B cell (primary cell): ENCODE measurements at regions of chr5 and their contacts with region 1.

Region 1: DNA sequence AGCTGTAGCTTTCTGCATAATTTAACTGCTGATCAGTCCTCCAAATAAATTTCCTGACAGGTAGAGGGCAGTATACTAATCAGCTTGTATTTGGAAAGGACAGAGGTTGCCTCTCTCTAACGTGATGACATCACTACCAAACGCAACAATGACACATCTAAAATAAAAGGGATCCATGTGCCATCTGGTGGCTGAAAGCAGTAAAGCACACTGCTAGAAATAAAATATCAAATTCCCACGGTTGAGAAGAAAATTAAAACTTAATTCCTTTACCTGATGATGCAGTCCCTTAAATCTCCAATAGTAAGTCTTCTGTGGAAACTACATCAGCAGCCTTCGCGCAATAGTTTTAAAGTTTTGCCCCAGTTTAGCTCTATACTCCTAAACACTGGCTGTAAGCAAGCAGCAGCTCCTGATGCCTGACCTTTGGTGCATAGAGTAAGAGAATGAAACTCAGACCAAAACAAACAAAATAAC is 54.5 kb downstream of the DIAPH1 start:
- DNase-seq: peak; percentile 91
- ATAC-seq: peak; percentile 97
- H3K4me3 ChIP-seq: no peak overlapping the region
- H3K4me3 Mint-ChIP-seq: no peak overlapping the region
- H3K27ac ChIP-seq: peak overlapping the region; percentile 5 to 46
- H3K27ac Mint-ChIP-seq: peak overlapping the region; percentile 70
- H3K4me1 ChIP-seq: no peaks in the 10 kb centered on the region
- H3K4me1 Mint-ChIP-seq: peaks cover 4% of the 10 kb centered on the region
- H3K27me3 ChIP-seq: no peaks in the 10 kb centered on the region
- H3K27me3 Mint-ChIP-seq: no peaks in the 10 kb centered on the region
- CTCF ChIP-seq: peak; percentile 93

Region 2: GRCh38 chr5:141084487-141084990 is 479.7 kb before region 1 on chr5:
- CTCF ChIA-PET with region 1: no interaction called
- POLR2A ChIA-PET with region 1: no interaction called
- intact Hi-C with region 1: loop called (anchors 10 kb)
- DNase-seq: peak; percentile 38
- ATAC-seq: no peak
- H3K4me3 ChIP-seq: peak overlapping the region in 4 of 5 experiments; percentile 20 to 52 (median 41)
- H3K4me3 Mint-ChIP-seq: peak overlapping the region; percentile 81
- H3K27ac ChIP-seq: no peak overlapping the region
- H3K27ac Mint-ChIP-seq: no peak overlapping the region
- H3K4me1 ChIP-seq: no peaks in the 10 kb centered on the region
- H3K4me1 Mint-ChIP-seq: peaks cover 5% of the 10 kb centered on the region
- H3K27me3 ChIP-seq: peaks cover 0 to 4% (median 0%) of the 10 kb centered on the region in 4 experiments
- H3K27me3 Mint-ChIP-seq: peaks cover 18% of the 10 kb centered on the region
- CTCF ChIP-seq: no peak

Region 3: DNA sequence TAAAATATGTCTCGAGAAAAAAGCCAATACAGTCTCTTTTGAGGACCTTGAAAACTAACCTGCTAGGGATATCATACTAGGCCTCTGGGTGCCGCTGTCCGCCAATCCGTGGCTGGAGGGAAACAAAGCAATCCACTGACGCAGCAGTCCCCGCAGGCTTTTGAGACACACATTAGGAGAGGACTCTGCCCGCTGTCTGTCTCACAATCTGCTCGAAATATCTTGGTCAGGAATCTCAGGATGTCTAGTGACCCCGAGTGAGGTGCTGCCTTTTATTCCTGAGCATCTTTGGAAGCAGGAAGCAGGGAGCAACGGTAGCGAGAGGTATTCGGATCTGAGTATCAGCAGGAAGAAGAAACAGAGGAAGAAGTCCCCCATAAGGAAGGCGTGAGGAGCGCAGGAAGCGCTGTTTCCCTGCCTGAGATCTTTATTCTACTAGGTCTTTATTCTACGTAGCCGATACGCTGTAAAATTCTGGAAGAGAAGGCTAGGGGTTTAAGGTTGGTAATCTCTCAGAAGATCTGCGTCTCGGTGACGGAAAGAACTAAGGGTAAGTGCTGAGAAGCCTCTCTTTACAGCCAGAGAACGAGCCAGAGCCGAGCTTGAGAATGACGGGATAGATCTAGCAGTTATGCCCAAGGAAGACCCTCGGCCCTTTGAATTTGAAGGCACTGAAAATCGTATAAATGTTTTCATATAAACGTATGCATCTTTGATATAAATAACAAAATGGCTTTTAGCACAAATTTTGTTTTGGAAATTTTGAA is 238.0 kb before region 1 on chr5:
- CTCF ChIA-PET with region 1: interaction called, 37 read pairs
- POLR2A ChIA-PET with region 1: no interaction called
- intact Hi-C with region 1: loop called (anchors 1 kb)
- DNase-seq: peak; percentile 72
- ATAC-seq: peak; percentile 90
- H3K4me3 ChIP-seq: peak overlapping the region; percentile 35 to 59 (median 51)
- H3K4me3 Mint-ChIP-seq: peak overlapping the region; percentile 94
- H3K27ac ChIP-seq: peak overlapping the region in 1 of 2 donors; percentile 26
- H3K27ac Mint-ChIP-seq: peak overlapping the region; percentile 89
- H3K4me1 ChIP-seq: peaks cover 6 to 10% of the 10 kb centered on the region in 2 donors
- H3K4me1 Mint-ChIP-seq: peaks cover 9% of the 10 kb centered on the region
- H3K27me3 ChIP-seq: peaks cover 0 to 30% (median 12%) of the 10 kb centered on the region in 4 experiments
- H3K27me3 Mint-ChIP-seq: peaks cover 41% of the 10 kb centered on the region
- CTCF ChIP-seq: peak; percentile 69

Region 4: GRCh38 chr5:141412854-141413539 is 151.3 kb before region 1 on chr5 and contains the start of gene PCDHGA10:
- CTCF ChIA-PET with region 1: interaction called, 56 read pairs
- POLR2A ChIA-PET with region 1: interaction called, 3 read pairs
- intact Hi-C with region 1: loop called (anchors 1 kb)
- DNase-seq: peak; percentile 65
- ATAC-seq: peak; percentile 68
- H3K4me3 ChIP-seq: peak within 1 kb of the TSS; percentile 5 to 63 (median 45)
- H3K4me3 Mint-ChIP-seq: peak within 1 kb of the TSS; percentile 87
- H3K27ac ChIP-seq: no peak within 1 kb of the TSS
- H3K27ac Mint-ChIP-seq: peak within 1 kb of the TSS; percentile 17
- H3K4me1 ChIP-seq: peaks cover 11 to 15% of the 10 kb centered on the region in 2 donors
- H3K4me1 Mint-ChIP-seq: peaks cover 18% of the 10 kb centered on the region
- H3K27me3 ChIP-seq: peaks cover 0 to 69% (median 55%) of the 10 kb centered on the region in 4 experiments
- H3K27me3 Mint-ChIP-seq: peaks cover 59% of the 10 kb centered on the region
- CTCF ChIP-seq: peak; percentile 82
- total RNA-seq, gene PCDHGA10: 1.9 and 2.0 TPM in 2 replicates

Region 5: DNA sequence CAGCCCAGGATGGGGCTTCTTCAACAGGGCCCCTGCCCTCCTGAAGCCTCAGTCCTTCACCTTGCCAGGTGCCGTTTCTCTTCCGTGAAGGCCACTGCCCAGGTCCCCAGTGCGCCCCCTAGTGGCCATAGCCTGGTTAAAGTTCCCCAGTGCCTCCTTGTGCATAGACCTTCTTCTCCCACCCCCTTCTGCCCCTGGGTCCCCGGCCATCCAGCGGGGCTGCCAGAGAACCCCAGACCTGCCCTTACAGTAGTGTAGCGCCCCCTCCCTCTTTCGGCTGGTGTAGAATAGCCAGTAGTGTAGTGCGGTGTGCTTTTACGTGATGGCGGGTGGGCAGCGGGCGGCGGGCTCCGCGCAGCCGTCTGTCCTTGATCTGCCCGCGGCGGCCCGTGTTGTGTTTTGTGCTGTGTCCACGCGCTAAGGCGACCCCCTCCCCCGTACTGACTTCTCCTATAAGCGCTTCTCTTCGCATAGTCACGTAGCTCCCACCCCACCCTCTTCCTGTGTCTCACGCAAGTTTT is 51.8 kb before region 1 on chr5:
- CTCF ChIA-PET with region 1: interaction called, 15 read pairs
- POLR2A ChIA-PET with region 1: no interaction called
- intact Hi-C with region 1: no loop called
- DNase-seq: peak; percentile 77
- ATAC-seq: peak; percentile 7
- H3K4me3 ChIP-seq: peak overlapping the region; percentile 31 to 74 (median 60)
- H3K4me3 Mint-ChIP-seq: peak overlapping the region; percentile 92
- H3K27ac ChIP-seq: peak overlapping the region in 1 of 2 donors; percentile 0
- H3K27ac Mint-ChIP-seq: peak overlapping the region; percentile 56
- H3K4me1 ChIP-seq: peaks cover 58 to 89% of the 10 kb centered on the region in 2 donors
- H3K4me1 Mint-ChIP-seq: peaks cover 85% of the 10 kb centered on the region
- H3K27me3 ChIP-seq: no peaks in the 10 kb centered on the region
- H3K27me3 Mint-ChIP-seq: no peaks in the 10 kb centered on the region
- CTCF ChIP-seq: peak; percentile 85

Region 6: GRCh38 chr5:141618804-141619554 is 54.7 kb after region 1 on chr5 and contains the start of gene DIAPH1:
- CTCF ChIA-PET with region 1: interaction called, 23 read pairs
- POLR2A ChIA-PET with region 1: interaction called, 4 read pairs
- intact Hi-C with region 1: loop called (anchors 1 kb)
- DNase-seq: peak; percentile 99
- ATAC-seq: peak; percentile 89
- H3K4me3 ChIP-seq: peak within 1 kb of the TSS; percentile 84 to 98 (median 94)
- H3K4me3 Mint-ChIP-seq: peak within 1 kb of the TSS; percentile 93
- H3K27ac ChIP-seq: peak within 1 kb of the TSS; percentile 86 to 92
- H3K27ac Mint-ChIP-seq: peak within 1 kb of the TSS; percentile 91
- H3K4me1 ChIP-seq: peaks cover 52 to 55% of the 10 kb centered on the region in 2 donors
- H3K4me1 Mint-ChIP-seq: peaks cover 59% of the 10 kb centered on the region
- H3K27me3 ChIP-seq: no peaks in the 10 kb centered on the region
- H3K27me3 Mint-ChIP-seq: no peaks in the 10 kb centered on the region
- CTCF ChIP-seq: peak; percentile 94
- total RNA-seq, gene DIAPH1: 111 and 113 TPM in 2 replicates